GM12878 (cell line): ENCODE measurements at regions of chr2 and their contacts with region 1.

Region 1: DNA sequence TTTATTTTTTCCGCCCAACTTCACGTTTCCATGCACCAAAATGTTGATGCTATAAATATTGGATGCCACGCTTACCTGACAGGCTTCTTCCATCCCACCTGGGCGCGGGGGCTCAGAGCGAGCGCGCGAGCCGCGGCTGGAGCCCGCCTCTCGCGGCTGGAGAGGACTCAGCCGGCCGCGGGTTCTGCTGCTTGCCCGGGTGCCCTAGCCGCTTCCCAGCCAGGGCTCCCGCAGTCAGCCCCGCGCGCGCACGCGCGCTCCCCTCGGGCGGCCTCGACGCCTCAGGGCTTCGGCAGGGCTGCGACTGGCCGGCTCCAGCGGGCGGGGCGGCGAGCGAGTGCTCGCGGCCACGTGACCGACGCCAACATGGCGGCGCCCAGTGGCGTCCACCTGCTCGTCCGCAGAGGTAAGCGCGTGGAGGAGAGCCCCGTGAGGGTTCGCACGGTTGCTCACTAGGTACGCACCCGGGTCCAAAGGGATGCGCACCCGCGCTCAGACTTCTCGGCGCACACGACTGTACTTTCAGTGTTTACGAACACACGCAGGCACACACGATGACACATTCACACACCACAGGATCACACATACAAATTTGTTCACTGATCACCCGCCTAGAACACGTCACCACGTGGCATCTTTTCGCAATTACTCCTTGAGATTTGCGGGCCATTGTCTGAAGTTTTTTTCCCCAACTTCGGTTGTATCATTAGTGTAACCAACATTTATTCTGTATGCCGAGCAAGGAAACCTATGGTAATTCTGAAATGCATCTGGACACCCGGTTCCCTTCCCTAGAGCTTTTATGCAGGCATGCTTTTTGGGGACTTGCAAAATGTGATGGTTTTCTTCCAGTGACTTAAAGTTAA is at the start of gene METAP1D:
- DNase-seq: peak; percentile 70
- ATAC-seq: peak; percentile 99
- H3K4me3 ChIP-seq: peak within 1 kb of the TSS; percentile 90
- H3K27ac ChIP-seq: peak within 1 kb of the TSS; percentile 78
- H3K4me1 ChIP-seq: peaks cover 6% of the 10 kb centered on the region
- H3K27me3 ChIP-seq: no peaks in the 10 kb centered on the region
- CTCF ChIP-seq: no peak
- EP300 ChIP-seq: no peak
- POLR2A ChIP-seq: peak; percentile 98
- RAD21 ChIP-seq: no peak
- polyA plus RNA-seq, gene METAP1D: 4.6 to 5.9 TPM

Region 2: DNA sequence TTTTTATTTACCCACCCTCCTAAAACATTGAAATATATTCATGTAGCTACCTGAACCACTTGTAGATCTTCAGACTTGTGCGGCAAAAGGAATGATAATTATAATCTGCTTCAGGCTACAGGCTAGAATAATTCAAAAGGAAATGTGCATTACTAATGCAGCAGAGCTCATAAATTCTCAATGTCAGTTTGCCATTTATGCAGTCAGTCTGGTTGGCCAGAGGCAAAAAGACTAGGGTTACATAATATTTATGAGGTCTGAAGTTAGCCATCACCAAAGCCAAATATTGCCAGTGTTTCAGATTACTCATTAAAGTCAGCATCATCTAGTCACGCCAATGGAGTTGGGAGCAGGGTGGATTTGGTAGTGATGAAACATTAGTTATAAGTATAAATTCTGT is 38.8 kb after region 1 on chr2:
- CTCF ChIA-PET with region 1: no interaction called
- POLR2A ChIA-PET with region 1: no interaction called
- RAD21 ChIA-PET with region 1: no interaction called
- SMC1A ChIA-PET with region 1: no interaction called
- in situ Hi-C with region 1: no loop called
- intact Hi-C with region 1: no loop called
- DNase-seq: no peak
- ATAC-seq: no peak
- H3K4me3 ChIP-seq: no peak overlapping the region
- H3K27ac ChIP-seq: no peak overlapping the region
- H3K4me1 ChIP-seq: no peaks in the 10 kb centered on the region
- H3K27me3 ChIP-seq: no peaks in the 10 kb centered on the region
- CTCF ChIP-seq: no peak
- EP300 ChIP-seq: no peak
- POLR2A ChIP-seq: no peak
- RAD21 ChIP-seq: no peak

Region 3: GRCh38 chr2:172084734-172085459 is 85.1 kb after region 1 on chr2:
- CTCF ChIA-PET with region 1: no interaction called
- POLR2A ChIA-PET with region 1: no interaction called
- RAD21 ChIA-PET with region 1: no interaction called
- SMC1A ChIA-PET with region 1: no interaction called
- in situ Hi-C with region 1: no loop called
- intact Hi-C with region 1: loop called (anchors 5 kb)
- DNase-seq: no peak
- ATAC-seq: peak; percentile 89
- H3K4me3 ChIP-seq: peak overlapping the region; percentile 69
- H3K27ac ChIP-seq: no peak overlapping the region
- H3K4me1 ChIP-seq: peaks cover 17% of the 10 kb centered on the region
- H3K27me3 ChIP-seq: peaks cover 47 to 68% of the 10 kb centered on the region in 2 experiments
- CTCF ChIP-seq: no peak
- EP300 ChIP-seq: no peak
- POLR2A ChIP-seq: peak; percentile 52; the same call in 1 of the 2 replicates
- RAD21 ChIP-seq: no peak

Region 4: DNA sequence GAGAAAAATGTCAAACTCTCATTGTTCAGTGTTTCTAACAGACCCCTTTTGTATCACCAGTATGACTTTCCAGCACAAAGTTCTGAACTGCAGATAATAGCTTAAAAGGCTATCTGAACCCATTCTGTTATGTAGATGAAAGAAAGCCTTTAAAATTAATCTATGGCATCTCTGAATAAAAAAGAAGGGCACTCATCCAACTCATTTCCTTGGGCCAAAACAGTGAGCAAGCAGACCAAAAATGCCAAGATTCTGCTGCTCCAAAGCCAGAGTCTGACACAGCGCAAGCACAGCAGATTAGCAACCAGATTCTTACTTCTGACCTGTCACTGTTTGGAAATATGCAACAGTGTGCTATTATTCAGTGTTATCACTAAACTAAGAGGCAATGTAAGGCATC is 405.0 kb after region 1 on chr2:
- CTCF ChIA-PET with region 1: no interaction called
- POLR2A ChIA-PET with region 1: no interaction called
- RAD21 ChIA-PET with region 1: no interaction called
- SMC1A ChIA-PET with region 1: no interaction called
- in situ Hi-C with region 1: no loop called
- intact Hi-C with region 1: no loop called
- DNase-seq: no peak
- ATAC-seq: no peak
- H3K4me3 ChIP-seq: no peak overlapping the region
- H3K27ac ChIP-seq: no peak overlapping the region
- H3K4me1 ChIP-seq: no peaks in the 10 kb centered on the region
- H3K27me3 ChIP-seq: peaks cover 0 to 4% of the 10 kb centered on the region in 2 experiments; a peak in 2 of 4 replicates
- CTCF ChIP-seq: no peak
- EP300 ChIP-seq: no peak
- POLR2A ChIP-seq: no peak
- RAD21 ChIP-seq: no peak